Activated CD4-positive, alpha-beta T cell treated with anti-CD3 and anti-CD28 coated beads for 36 hours (primary cell): ENCODE measurements at regions of chr20 and their contacts with region 1.

Region 1: DNA sequence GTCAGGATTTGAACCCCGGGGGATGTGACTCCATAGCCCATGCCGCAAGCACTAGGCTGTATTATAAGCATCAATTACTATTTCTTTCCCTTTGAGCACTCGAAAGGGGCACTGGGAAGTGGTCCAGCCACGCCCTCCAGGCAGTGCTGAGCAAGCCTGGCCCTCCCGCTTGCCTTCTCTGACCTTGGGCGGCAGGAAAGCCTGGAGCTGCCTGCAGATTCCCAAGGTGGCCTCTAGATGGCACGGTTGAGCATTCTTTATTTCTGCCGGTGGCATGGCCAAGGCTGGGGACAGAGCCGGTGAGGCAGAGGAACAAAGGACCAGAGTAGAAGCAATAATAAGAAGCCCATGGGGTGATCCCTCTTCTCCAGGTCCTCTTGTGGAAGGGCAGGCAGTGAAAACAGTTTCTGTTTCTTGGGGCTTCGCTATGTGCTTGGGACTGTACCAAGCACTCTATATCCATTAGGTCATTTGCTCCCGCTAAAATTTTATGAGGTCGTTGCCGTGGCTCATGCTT is 32.0 kb downstream of the ARHGAP40 start:
- DNase-seq: peak; percentile 79
- ATAC-seq: peak; percentile 95
- H3K4me3 Mint-ChIP-seq: no peak overlapping the region
- H3K27ac Mint-ChIP-seq: no peak overlapping the region
- H3K4me1 Mint-ChIP-seq: no peaks in the 10 kb centered on the region
- H3K27me3 Mint-ChIP-seq: peaks cover 10% of the 10 kb centered on the region

Region 2: DNA sequence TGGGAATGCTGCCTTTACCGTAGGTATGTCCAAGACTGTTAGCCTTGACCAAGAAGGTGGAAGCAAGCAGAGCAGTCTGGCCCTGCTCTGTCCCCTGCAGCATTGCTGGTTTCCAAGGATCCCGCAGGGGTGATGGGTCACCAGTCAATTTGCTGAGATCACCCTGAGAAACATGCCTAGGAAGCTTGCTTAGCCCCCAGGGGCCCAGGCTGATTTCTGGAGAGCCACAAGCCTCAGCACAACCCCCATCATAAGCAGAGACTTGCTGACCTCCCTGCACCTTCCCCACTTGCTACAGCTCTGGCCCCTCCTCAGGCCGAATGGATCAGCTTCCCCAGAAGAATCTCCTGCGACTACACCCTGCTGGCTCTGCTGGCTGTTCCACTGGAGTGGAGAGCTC is 10.6 kb before region 1 on chr20:
- CTCF ChIA-PET with region 1: interaction called, 10 read pairs
- POLR2A ChIA-PET with region 1: no interaction called
- intact Hi-C with region 1: no loop called
- DNase-seq: no peak
- ATAC-seq: no peak
- H3K4me3 Mint-ChIP-seq: no peak overlapping the region
- H3K27ac Mint-ChIP-seq: no peak overlapping the region
- H3K4me1 Mint-ChIP-seq: no peaks in the 10 kb centered on the region
- H3K27me3 Mint-ChIP-seq: peaks cover 16% of the 10 kb centered on the region